IMR-90 (cell line): ENCODE measurements at regions of chr2 and their contacts with region 1.

Region 1: DNA sequence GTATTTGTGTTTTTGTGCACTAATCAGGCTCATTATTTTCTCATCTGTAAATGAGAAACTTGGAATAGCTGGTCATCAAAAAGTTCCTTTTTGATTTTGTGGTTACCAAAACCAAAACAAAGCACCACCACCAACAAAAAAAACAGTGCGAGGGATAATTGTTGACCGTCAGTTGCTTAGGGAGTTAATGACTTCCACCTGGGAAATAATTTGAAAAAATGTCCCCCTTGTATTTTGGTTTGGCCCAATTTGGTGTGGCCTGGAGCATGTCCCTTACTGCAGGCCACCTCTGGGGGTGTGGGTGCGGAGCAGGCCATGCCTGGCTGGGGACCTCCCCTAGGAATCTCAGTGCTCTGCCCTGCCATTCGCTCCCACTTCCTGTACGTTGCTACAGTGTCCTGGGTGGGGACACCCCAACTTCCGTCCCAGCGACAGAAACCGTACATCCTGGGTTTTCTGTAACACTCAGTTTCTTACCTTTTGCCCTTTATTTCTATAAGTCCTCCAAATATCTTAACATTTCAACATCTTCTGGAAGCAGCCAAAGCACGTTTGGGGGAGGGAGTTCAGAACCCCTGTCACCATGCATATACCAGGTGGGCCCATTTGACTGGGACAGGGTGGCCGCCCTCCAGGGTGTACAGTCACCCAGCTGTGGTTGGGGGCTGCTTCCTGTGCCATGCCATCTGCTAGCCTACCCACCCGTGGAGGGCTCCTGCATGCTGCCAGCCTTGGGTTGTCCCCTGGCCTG is 31.3 kb downstream of the NCK2 start:
- DNase-seq: no peak
- ATAC-seq: no peak
- H3K4me3 ChIP-seq: no peak overlapping the region
- H3K27ac ChIP-seq: no peak overlapping the region
- H3K4me1 ChIP-seq: peaks cover 10% of the 10 kb centered on the region
- H3K27me3 ChIP-seq: no peaks in the 10 kb centered on the region
- CTCF ChIP-seq: no peak
- POLR2A ChIP-seq: no peak
- RAD21 ChIP-seq: no peak

Region 2: DNA sequence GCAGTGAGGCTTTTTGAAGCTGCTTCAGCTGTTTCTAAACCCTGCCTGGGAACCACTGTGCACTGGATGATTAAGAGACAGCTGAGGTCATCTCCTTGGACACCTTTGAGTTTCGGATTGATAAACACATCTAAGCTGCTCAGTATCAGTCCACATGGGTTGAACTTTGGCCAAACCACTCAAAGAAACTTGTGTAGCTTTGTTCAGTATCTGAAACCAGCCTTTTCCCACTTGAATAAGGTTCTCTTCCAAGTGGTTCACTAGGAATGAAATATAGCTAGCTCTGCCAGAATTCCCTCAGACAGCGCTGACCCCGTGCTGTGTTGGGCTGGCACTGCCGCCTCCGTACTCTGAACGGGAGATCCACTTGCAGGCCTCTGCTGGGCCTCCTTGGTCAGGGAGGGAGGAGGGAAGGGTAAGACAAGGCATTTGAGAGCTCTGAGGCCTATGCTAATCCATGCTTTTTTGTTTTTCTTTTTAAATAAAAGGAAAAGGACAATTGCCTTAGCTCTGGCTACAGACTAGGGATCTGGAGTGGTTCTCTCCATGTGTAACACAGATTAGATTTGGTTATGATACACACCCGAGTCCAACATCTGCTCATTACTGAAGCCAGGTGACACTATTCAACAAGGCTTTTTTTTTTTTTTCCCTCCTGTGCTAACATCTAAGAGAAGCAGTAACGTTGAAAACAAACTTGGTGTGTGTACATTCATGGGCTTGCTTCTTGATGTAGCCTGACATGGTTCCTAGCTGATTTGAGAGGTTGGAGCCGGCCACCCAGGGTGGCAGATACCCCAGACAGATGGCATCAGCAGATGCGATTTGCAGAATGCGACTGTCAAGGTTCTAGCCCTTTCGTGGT is 36.4 kb after region 1 on chr2:
- CTCF ChIA-PET with region 1: no interaction called
- POLR2A ChIA-PET with region 1: no interaction called
- dilution Hi-C with region 1: no loop called
- in situ Hi-C with region 1: no loop called
- intact Hi-C with region 1: loop called (anchors 2 kb)
- DNase-seq: peak; percentile 93
- ATAC-seq: peak; percentile 92
- H3K4me3 ChIP-seq: no peak overlapping the region
- H3K27ac ChIP-seq: no peak overlapping the region
- H3K4me1 ChIP-seq: peaks cover 11% of the 10 kb centered on the region; the same call in 1 of the 2 replicates
- H3K27me3 ChIP-seq: no peaks in the 10 kb centered on the region; the same call in 1 of the 2 replicates
- CTCF ChIP-seq: no peak
- POLR2A ChIP-seq: no peak
- RAD21 ChIP-seq: no peak